ENCODE measurements at regions of chr4 and their contacts with region 1.

Region 1: GRCh38 chr4:26410385-26411293 is 79.6 kb downstream of the CCKAR start:
- DNase-seq: no peak
- ATAC-seq: peak; percentile 76

Region 2: GRCh38 chr4:25981749-25982148 is 428.9 kb before region 1 on chr4:
- intact Hi-C with region 1: loop called (anchors 10 kb)
- DNase-seq: no peak
- ATAC-seq: no peak

Region 3: GRCh38 chr4:26028793-26029567 is 381.7 kb before region 1 on chr4:
- intact Hi-C with region 1: loop called (anchors 10 kb)
- DNase-seq: peak; percentile 87
- ATAC-seq: peak; percentile 89

Region 4: DNA sequence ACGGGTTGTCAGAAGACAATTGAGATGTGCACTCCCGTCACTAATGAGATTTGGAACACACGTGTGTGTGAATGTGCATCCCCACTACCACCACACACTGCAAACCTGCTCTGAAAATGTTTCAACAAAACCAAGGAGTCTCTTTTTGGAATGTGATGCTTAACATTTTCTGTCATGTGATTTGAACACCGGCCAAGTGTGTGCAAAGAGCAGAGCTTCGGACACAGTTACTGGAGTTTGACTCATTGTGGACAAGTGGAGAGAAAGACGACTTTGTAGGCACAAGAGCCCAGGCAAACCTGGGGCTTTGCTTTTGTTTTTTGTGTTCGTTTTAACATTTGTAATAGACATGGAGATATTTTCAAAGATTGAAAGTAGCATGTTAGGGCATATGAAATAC is 30.5 kb after region 1 on chr4:
- intact Hi-C with region 1: no loop called
- DNase-seq: no peak
- ATAC-seq: no peak